PC-3 (cell line): ENCODE measurements at regions of chr3 and their contacts with region 1.

Region 1: GRCh38 chr3:182490596-182491491 is 302.5 kb upstream of the ATP11B start:
- DNase-seq: peak; percentile 66
- ATAC-seq: peak; percentile 71
- H3K4me3 ChIP-seq: no peak overlapping the region
- H3K27ac ChIP-seq: no peak overlapping the region
- H3K4me1 ChIP-seq: peaks cover 9% of the 10 kb centered on the region; the same call in 1 of the 2 replicates
- H3K27me3 ChIP-seq: no peaks in the 10 kb centered on the region
- CTCF ChIP-seq: peak; percentile 84

Region 2: DNA sequence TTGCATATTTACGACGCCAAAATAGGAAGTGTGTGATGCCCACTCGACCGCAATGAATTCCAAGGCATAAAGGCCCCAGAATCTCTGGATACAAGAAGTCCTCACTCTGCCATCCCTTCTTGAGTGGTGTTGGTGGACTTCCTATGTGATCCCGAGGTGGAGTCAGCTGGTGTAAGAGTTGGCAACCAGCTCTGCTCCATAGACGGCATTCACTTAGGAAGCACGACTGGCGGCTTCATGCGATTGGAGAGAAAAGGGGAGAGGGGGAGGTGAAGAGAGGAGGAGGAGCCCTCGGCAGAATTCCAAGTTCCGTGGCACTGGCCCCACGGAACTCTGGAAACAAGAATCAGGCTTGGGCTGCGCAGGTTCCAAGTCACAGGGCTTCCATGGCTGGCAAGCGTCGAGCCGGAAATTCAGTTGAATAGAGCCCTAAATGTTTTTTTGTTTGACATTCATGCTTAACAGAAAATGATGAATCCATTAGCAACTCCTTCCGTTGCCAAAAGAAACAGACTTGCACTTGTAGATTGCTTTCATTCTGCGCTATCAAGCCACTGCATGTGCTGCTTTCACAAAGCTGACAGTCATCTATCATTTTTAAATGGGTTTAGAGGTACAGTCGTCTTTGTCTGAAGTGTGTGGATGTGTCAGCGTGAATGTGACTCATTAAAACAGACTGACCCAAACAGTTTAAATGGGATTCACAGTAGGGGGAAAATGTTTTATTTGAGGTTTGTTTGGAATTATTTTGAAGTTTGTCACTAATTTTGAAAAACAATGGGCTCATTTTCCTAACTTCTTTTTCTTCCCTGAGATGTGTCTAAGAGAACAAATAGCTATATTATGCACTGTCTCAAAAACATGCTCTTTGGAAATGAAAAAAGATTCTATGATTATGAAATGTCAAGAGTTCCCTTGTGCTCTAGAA is 125.9 kb before region 1 on chr3:
- CTCF ChIA-PET with region 1: no interaction called
- POLR2A ChIA-PET with region 1: interaction called, 16 read pairs
- intact Hi-C with region 1: loop called (anchors 5 kb)
- DNase-seq: peak; percentile 66
- ATAC-seq: peak; percentile 89
- H3K4me3 ChIP-seq: peak overlapping the region; percentile 38; the same call in 1 of the 2 replicates
- H3K27ac ChIP-seq: no peak overlapping the region
- H3K4me1 ChIP-seq: peaks cover 16% of the 10 kb centered on the region
- H3K27me3 ChIP-seq: no peaks in the 10 kb centered on the region
- CTCF ChIP-seq: 0 out of 2 replicates have a peak, but pooled peaks have one; percentile 1

Region 3: GRCh38 chr3:182370949-182371348 is 119.9 kb before region 1 on chr3:
- CTCF ChIA-PET with region 1: no interaction called
- POLR2A ChIA-PET with region 1: interaction called, 16 read pairs
- intact Hi-C with region 1: loop called (anchors 5 kb)
- DNase-seq: peak; percentile 81
- ATAC-seq: peak; percentile 99
- H3K4me3 ChIP-seq: no peak overlapping the region
- H3K27ac ChIP-seq: no peak overlapping the region
- H3K4me1 ChIP-seq: peaks cover 16% of the 10 kb centered on the region
- H3K27me3 ChIP-seq: no peaks in the 10 kb centered on the region
- CTCF ChIP-seq: no peak